Aorta (tissue), 5 donors: ENCODE measurements at regions of chr14 and their contacts with region 1.

Region 1: DNA sequence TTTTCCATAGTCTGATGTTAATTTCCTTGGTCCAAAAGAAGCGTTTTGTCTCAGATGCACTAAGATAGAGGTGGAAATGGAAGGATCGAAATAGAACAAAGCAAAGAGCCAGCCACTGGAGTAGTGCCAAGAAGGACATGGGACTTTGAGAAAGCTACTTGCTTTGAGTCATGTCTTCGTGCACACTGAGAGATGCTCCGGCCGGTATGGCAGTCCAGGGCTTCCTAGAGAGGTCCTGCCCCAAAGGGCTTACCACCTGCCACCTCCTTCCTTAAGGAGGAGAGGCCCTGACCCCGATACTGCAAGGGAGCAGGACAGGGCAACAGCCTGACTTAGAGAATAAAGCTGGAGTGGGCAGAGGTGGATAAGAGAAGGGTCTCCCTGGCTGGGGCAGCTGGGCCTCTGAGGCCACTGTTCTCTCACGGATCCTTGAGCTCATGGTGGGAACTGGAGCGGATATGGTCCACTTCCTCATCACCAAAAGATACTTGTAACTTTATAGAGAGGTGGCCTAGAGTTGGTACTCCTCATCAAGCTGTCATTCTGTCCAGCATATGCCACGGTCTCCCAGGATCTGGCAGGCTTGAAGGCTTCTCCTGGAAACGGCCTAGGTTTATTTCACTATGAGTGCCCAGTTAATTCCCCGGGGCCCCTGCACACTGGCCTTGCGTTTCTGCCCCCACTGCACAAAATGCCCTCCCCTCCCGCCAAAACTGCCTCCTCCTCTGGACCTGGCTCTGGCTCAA is 57.4 kb downstream of the FOXN3 start:
- DNase-seq: peak; percentile 66 to 80
- ATAC-seq: peak; percentile 67
- H3K4me3 ChIP-seq: no peak overlapping the region
- H3K27ac ChIP-seq: peak overlapping the region; percentile 43 to 84
- H3K4me1 ChIP-seq: peaks cover 0 to 6% of the 10 kb centered on the region in 2 donors
- H3K27me3 ChIP-seq: no peaks in the 10 kb centered on the region

Region 2: DNA sequence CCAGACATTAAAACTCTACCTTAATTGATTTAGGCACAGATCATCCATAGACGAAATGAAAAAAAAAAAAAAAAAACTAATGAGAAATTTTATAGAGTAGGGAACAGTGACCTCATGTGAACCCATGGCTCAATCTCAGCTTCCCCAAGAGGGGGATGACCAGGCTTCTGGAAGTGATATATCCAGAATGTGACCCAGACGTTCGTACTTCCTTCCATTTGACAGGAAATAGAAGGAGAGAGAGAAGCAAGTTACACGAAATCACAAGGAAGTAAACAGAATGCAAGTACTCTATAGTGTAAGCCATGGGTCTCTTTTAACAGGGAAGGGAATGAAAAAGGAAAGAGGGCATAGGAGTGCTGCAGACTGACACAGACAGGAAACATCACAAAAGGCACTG is 47.3 kb after region 1 on chr14:
- intact Hi-C with region 1: loop called in 1 of 2 experiments (anchors 5 kb)
- DNase-seq: no peak
- ATAC-seq: no peak
- H3K4me3 ChIP-seq: no peak overlapping the region
- H3K27ac ChIP-seq: peak overlapping the region in 1 of 2 donors; percentile 21
- H3K4me1 ChIP-seq: peaks cover 4% of the 10 kb centered on the region in 2 donors
- H3K27me3 ChIP-seq: no peaks in the 10 kb centered on the region